CD14-positive monocyte (primary cell): ENCODE measurements at regions of chr2 and their contacts with region 1.

Region 1: GRCh38 chr2:42835577-42836371 is 43.4 kb upstream of the HAAO start:
- DNase-seq: peak; percentile 79 to 92 (median 90)
- H3K4me3 ChIP-seq: peak overlapping the region in 1 of 3 experiments; percentile 30
- H3K4me3 Mint-ChIP-seq: peak overlapping the region in 1 of 2 donors; percentile 64
- H3K27ac ChIP-seq: peak overlapping the region; percentile 11 to 68
- H3K27ac Mint-ChIP-seq: peak overlapping the region; percentile 58 to 93 (median 86)
- H3K4me1 ChIP-seq: peaks cover 13 to 19% of the 10 kb centered on the region in 2 donors
- H3K4me1 Mint-ChIP-seq: peaks cover 11% of the 10 kb centered on the region
- H3K27me3 ChIP-seq: no peaks in the 10 kb centered on the region
- H3K27me3 Mint-ChIP-seq: no peaks in the 10 kb centered on the region
- CTCF ChIP-seq: no peak

Region 2: GRCh38 chr2:42901076-42901640 is 65.4 kb after region 1 on chr2:
- intact Hi-C with region 1: no loop called
- DNase-seq: no peak
- H3K4me3 ChIP-seq: no peak overlapping the region
- H3K4me3 Mint-ChIP-seq: no peak overlapping the region
- H3K27ac ChIP-seq: no peak overlapping the region
- H3K27ac Mint-ChIP-seq: no peak overlapping the region
- H3K4me1 ChIP-seq: peaks cover 9 to 11% of the 10 kb centered on the region in 2 donors
- H3K4me1 Mint-ChIP-seq: peaks cover 22% of the 10 kb centered on the region
- H3K27me3 ChIP-seq: peaks cover 0 to 4% of the 10 kb centered on the region in 2 donors
- H3K27me3 Mint-ChIP-seq: peaks cover 0 to 16% (median 9%) of the 10 kb centered on the region in 3 donors
- CTCF ChIP-seq: no peak

Region 3: GRCh38 chr2:42931146-42931817 is 95.5 kb after region 1 on chr2:
- intact Hi-C with region 1: loop called in 1 of 2 experiments (anchors 10 kb)
- DNase-seq: no peak
- H3K4me3 ChIP-seq: no peak overlapping the region
- H3K4me3 Mint-ChIP-seq: no peak overlapping the region
- H3K27ac ChIP-seq: no peak overlapping the region
- H3K27ac Mint-ChIP-seq: no peak overlapping the region
- H3K4me1 ChIP-seq: peaks cover 5 to 8% of the 10 kb centered on the region in 2 donors
- H3K4me1 Mint-ChIP-seq: peaks cover 32% of the 10 kb centered on the region
- H3K27me3 ChIP-seq: no peaks in the 10 kb centered on the region
- H3K27me3 Mint-ChIP-seq: peaks cover 0 to 7% (median 1%) of the 10 kb centered on the region in 3 donors
- CTCF ChIP-seq: peak; percentile 31

Region 4: GRCh38 chr2:43169987-43170386 is 334.2 kb after region 1 on chr2:
- intact Hi-C with region 1: no loop called
- DNase-seq: peak in 1 of 3 donors; percentile 38
- H3K4me3 ChIP-seq: peak overlapping the region in 1 of 3 experiments; percentile 72
- H3K4me3 Mint-ChIP-seq: peak overlapping the region; percentile 80 to 95
- H3K27ac ChIP-seq: peak overlapping the region; percentile 91 to 92
- H3K27ac Mint-ChIP-seq: peak overlapping the region; percentile 98 to 100 (median 99)
- H3K4me1 ChIP-seq: peaks cover 84 to 92% of the 10 kb centered on the region in 2 donors
- H3K4me1 Mint-ChIP-seq: peaks cover 86% of the 10 kb centered on the region
- H3K27me3 ChIP-seq: no peaks in the 10 kb centered on the region
- H3K27me3 Mint-ChIP-seq: peaks cover 0 to 4% (median 2%) of the 10 kb centered on the region in 3 donors
- CTCF ChIP-seq: peak; percentile 76